Posterior cingulate gyrus (tissue), 11 donors: ENCODE measurements at regions of chr1 and their contacts with region 1.

Region 1: DNA sequence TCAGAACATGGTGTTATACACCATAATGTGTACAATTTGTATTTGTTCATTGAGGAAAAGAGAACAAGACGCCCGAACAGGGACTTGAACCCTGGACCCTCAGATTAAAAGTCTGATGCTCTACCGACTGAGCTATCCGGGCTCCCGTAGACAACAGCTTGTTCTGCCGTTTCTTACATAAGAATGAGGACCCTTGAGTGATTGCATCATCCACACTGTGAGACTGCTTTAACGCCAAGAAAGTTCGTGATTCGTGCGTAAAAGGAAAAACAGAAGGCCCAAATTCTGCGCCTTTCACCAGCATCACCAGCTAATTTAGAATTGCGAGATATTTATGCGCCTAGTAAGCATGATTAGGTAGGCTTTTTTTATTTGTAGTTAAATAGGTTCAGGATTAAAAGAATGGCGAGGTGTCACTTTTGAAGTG is 9.2 kb upstream of the MDM4 start:
- DNase-seq: peak in 8 of 10 donors; percentile 58 to 93 (median 78)

Region 2: DNA sequence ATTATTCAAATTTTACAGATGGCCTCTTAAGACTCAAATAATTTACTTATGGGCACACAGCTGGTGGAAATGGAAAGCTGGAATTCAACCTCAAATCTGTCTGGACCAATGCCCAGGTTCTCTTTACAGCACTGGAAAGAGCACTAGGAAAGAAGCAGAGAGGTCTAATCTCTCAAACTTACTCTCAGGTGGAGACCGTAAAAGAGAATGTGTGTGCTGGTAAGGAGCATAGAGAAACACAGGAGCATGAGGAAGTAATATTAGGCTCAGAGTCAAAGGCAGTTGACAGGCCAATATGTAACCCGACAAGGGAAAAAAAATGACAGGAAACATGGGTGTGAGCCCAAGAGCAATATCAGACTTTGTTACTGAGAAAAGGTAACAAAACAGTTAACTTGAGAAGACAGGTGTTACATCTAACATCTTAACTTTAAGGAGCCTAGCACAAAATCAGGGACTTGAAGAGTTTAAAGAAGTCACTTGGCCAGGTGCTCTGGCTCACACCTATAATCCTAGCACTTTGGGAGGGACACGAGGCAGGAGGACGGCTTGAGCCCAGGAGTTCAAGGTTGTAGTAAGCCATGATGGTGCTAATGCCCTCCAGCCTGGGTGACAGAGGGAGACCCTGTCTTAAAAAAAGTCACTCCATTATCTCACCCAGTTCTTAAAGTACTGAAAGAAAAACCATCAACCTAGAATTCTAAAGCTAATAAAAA is 116.1 kb before region 1 on chr1:
- intact Hi-C with region 1: no loop called
- DNase-seq: no peak

Region 3: GRCh38 chr1:204431310-204432165 is 75.4 kb before region 1 on chr1:
- intact Hi-C with region 1: loop called (anchors 2 kb)
- DNase-seq: peak; percentile 59 to 97 (median 82)

Region 4: GRCh38 chr1:204446370-204447111 is 60.4 kb before region 1 on chr1:
- intact Hi-C with region 1: loop called (anchors 1 kb)
- DNase-seq: peak; percentile 51 to 96 (median 77)

Region 5: DNA sequence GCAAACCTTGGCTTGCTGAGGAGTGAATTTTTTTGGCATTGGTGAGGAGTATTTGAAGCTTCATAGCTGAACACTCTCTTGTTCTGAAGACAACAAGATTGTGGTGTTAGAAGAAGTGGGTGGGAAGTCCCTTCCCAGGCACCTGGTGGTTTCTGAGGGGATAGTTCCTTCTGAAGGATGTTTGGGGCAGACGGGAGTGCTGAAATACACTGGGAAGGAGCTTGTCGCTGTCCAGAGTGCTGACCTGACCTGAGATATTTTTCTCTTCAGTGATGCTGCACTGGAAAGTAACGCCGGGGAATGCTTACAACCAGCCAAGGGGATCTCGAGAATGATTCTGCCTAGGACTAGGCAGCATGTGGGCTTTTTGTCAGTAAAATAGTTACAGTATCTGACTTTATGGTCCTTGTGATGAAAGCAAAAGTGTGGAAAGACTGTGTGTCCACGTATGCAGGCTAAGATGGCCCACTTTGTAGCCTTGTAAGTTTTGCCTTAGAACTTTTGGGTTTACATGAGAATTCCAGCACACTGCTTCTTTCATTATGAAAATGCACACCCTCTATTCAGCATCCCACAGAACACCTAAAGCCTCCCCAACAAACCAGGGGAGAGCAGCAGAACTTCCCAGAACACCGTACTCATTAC is 330.6 kb after region 1 on chr1:
- intact Hi-C with region 1: no loop called
- DNase-seq: peak in 3 of 10 donors; percentile 35 to 48 (median 45)